Mammary epithelial cell (primary cell): ENCODE measurements at regions of chr22 and their contacts with region 1.

Region 1: DNA sequence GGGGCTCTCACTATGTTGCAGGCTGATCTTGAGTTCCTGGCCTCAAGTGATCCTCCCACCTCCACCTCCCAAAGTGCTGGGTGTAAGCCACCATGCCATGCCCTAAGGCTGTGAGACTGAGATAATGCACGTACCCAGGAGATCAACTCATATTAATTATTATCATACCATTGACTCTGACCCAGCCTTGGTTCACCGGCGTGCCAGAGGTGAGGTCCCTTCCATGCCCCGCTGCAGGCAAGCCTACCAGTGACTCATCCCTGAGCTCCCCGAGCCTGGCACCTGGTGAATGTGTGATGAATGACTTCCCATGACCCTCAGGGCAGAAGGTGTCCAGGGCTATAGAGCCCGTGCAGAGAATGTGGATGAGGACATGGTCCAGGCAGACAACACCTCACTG is 12.1 kb downstream of the GAL3ST1 start:
- DNase-seq: peak; percentile 29
- H3K4me3 ChIP-seq: no peak overlapping the region
- H3K27ac ChIP-seq: no peak overlapping the region
- H3K4me1 ChIP-seq: no peaks in the 10 kb centered on the region
- H3K27me3 ChIP-seq: no peaks in the 10 kb centered on the region
- CTCF ChIP-seq: no peak

Region 2: DNA sequence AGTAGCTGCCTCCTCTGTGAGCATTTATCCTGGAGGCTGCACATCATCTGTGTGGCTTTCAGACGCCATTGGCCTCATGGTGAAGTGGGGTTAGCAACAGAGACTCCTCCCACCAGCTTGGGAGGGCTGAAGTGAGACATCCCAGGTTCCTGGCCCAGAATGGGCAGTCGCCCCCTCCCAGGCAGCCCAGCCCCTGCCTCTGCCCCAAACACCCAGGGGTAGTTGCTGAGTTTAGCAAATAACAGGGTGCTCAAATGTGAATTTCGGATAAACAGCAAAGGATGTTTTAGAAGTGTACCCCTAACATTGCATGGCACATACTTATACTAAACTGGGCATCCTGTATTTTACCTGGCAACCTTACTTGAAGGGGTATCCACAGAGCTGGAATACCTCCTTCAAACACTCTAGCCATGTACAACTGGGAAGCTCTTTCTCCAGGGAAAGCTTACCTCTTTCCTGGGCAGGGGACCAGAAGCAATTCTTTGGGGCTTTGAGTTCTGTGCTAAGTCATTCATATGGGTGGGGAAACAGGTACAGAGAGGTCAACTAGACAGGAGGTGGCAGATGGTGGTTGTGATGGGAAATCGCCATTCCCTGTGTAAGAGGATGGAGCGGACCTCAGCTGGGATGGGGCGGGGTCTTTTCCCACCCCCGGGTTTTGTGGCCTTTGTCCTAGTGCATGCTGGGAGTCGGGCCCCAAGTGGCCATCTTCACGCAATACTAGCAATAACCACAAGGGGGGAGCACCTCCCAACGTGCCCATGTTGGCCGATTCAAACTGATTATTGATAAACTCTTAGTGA is 117.5 kb before region 1 on chr22:
- CTCF ChIA-PET with region 1: no interaction called
- dilution Hi-C with region 1: loop called (anchors 5 kb)
- in situ Hi-C with region 1: no loop called
- intact Hi-C with region 1: no loop called
- DNase-seq: peak; percentile 34
- H3K4me3 ChIP-seq: no peak overlapping the region
- H3K27ac ChIP-seq: no peak overlapping the region
- H3K4me1 ChIP-seq: peaks cover 14% of the 10 kb centered on the region
- H3K27me3 ChIP-seq: no peaks in the 10 kb centered on the region
- CTCF ChIP-seq: peak; percentile 74 to 80

Region 3: DNA sequence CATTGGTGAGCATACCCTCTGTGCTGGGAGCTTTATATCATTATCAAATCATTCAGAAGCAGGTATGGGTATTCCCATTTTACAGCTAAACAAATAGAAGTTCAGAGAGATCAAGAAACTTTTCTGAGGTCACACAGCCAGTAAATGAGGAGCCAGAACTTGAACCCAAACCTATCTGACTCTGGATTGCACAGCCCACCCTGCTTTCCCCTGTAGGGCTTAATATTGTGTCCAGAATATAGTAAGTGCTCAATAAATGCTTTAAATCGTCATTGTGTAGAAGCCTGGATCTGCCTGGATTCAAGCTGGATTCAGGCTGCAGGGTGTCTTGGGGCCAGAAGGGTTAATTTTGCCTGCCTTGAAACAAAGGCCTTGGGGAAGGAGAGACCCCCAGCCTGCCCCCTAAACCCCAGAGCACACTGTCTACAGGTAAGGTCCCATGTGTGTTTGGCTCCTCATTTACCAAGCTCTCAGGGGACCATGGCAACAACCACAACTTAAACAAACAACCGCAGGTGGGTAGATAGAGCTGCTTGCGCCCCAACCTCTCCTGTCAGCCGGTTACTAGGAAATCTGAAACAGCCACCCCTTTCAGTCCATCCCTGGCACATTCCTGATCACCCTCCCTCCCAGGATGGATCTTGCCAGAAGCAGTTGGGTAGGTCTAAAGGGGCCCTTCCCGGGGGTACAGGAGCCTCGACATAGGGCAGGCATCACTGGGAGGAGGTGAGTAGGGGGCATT is 87.5 kb before region 1 on chr22:
- CTCF ChIA-PET with region 1: no interaction called
- dilution Hi-C with region 1: loop called (anchors 5 kb)
- in situ Hi-C with region 1: no loop called
- intact Hi-C with region 1: no loop called
- DNase-seq: peak; percentile 25
- H3K4me3 ChIP-seq: no peak overlapping the region
- H3K27ac ChIP-seq: no peak overlapping the region
- H3K4me1 ChIP-seq: peaks cover 8% of the 10 kb centered on the region
- H3K27me3 ChIP-seq: no peaks in the 10 kb centered on the region
- CTCF ChIP-seq: no peak

Region 4: DNA sequence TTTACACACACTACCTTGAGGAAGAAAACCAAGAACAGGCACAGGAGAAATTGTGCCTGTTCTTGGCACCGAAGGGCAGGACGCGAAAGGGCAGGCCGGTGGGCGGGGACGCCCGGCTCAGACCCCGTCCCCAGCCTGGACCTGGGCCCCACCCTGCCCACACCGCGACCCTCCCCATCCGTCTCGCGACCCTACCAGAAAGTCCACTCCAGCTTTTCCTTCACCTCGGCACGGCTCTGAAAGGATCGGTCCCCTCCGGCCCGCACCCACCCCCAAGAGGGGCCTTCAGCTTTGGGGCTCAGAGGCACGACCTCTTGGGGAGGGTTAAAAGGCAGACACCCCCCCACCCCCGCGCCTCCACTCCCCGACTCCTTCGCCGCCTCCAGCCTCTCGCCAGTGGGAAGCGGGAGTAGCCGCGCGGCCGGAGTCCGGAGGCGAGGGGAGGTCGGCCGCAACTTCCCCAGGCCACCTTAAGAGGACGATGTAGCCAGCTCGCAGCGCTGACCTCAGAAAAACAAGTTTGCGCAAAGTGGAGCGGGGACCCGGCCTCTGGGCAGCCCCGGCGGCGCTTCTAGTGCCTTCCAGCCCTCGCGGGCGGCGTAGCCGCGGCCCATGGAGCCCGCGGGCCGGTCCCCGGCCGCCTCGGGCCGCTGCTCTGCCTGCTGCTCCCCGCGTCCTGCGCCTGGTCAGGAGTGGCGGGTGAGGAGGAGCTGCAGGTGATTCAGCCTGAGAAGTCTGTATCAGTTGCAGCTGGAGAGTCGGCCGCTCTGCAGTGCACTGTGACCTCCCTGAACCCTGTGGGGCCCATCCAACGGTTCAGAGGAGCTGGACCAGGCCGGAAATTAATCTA is 20.2 kb before region 1 on chr22:
- CTCF ChIA-PET with region 1: no interaction called
- dilution Hi-C with region 1: no loop called
- in situ Hi-C with region 1: no loop called
- intact Hi-C with region 1: loop called (anchors 2 kb)
- DNase-seq: no peak
- H3K4me3 ChIP-seq: peak overlapping the region in 1 of 3 experiments; percentile 22
- H3K27ac ChIP-seq: no peak overlapping the region
- H3K4me1 ChIP-seq: no peaks in the 10 kb centered on the region
- H3K27me3 ChIP-seq: peaks cover 15% of the 10 kb centered on the region
- CTCF ChIP-seq: no peak